Left lung (tissue), 14 donors: ENCODE measurements at regions of chr4 and their contacts with region 1.

Region 1: GRCh38 chr4:8468746-8469535 is 28.4 kb downstream of the TRMT44 start:
- DNase-seq: peak; percentile 36 to 90 (median 66)
- ATAC-seq: peak; percentile 87
- H3K4me3 ChIP-seq: no peak overlapping the region
- H3K27ac ChIP-seq: no peak overlapping the region
- H3K4me1 ChIP-seq: peaks cover 0 to 12% of the 10 kb centered on the region in 2 donors
- H3K27me3 ChIP-seq: no peaks in the 10 kb centered on the region
- CTCF ChIP-seq: peak; percentile 78 to 84

Region 2: DNA sequence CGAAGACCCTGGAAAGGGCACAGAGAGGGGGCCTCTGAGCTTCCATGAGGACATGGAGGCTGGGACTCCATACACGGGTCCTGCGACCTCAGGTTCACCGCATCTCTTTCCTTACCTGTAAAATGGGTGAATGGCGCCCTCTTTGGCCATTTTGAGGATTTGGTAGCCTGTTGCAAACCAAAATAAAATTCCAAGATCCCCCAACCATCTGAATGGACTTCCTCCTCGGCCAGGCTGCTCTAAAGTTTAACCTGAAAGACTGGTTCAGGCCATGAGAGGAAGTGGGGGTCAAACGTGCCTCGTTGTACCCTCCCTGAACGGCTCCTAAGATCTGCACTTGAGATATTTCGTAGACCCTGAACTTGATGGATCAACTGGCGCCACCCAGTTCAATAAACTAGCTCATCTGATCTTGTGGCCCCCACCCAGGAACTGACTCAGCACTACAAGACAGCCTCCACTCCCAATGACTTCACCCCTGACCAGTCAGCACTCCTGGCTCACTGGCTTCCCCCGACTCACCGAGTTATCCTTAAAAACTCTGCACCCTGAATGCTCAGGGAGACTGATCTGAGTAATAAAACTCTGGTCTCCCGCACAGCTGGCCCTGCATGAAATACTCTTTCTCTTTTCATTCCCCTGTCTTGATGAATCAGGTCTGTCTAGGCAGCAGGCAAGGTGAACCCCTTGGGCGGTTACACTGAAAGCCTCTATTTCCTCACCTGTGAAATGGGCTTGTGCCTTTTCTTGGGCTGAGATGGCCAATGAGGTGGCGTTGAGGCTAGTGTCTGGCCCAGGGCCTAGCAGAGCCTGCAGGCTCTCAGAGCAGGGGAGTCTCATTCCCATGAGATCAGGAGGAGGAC is 78.4 kb after region 1 on chr4:
- intact Hi-C with region 1: loop called in 1 of 2 experiments (anchors 10 kb)
- DNase-seq: no peak
- ATAC-seq: peak; percentile 65
- H3K4me3 ChIP-seq: no peak overlapping the region
- H3K27ac ChIP-seq: no peak overlapping the region
- H3K4me1 ChIP-seq: no peaks in the 10 kb centered on the region
- H3K27me3 ChIP-seq: no peaks in the 10 kb centered on the region
- CTCF ChIP-seq: peak; percentile 28 to 45

Region 3: DNA sequence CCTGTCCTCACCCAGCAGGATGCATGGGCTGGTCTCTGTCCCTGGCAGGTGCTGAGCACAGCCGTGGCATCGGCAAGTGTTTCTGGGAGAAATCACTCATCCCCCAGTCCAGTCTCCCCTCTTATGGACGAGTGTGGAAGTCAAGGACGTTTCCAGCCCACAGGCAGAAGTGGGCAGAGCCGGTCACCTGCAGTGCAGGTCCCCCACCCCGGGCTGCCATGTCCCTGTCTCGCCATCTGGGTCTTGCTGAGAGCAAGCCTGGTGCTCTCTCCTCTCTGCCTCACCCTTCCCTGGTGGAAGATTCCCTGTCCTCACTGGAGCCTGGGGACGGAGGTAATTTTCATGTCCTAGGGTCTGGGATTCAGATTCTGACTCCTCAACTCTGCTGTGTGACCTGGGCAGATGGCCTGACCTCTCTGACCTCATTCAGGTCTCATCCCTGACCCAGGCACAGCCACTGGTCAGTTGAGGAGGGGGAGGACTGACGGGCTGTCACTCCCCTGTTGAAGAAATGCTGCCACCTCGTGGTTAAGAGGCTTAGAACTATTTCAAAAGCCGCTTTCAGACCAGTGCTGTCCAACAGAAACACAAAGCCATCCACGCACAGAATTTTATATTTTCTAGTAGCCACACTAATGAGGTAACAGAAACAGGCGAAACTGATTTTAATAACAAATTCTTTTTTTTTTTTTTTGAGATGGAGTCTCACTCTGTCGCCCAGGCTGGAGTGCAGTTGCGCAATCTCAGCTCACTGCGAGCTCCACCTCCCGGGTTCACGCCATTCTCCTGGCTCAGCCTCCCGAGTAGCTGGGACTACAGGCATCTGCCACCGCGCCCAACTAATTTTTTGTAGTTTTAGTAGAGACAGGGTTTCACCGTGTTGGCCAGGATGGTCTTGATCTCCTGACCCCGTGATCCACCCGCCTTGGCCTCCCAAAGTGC is 125.4 kb after region 1 on chr4:
- intact Hi-C with region 1: loop called in 1 of 2 experiments (anchors 5 kb)
- DNase-seq: peak in 3 of 4 donors; percentile 48 to 76 (median 53)
- ATAC-seq: peak; percentile 77
- H3K4me3 ChIP-seq: no peak overlapping the region
- H3K27ac ChIP-seq: no peak overlapping the region
- H3K4me1 ChIP-seq: peaks cover 0 to 7% of the 10 kb centered on the region in 2 donors
- H3K27me3 ChIP-seq: peaks cover 14 to 58% of the 10 kb centered on the region in 2 donors
- CTCF ChIP-seq: peak; percentile 48 to 52